Posterior cingulate gyrus (tissue), 11 donors: ENCODE measurements at regions of chr22 and their contacts with region 1.

Region 1: GRCh38 chr22:41448189-41448808 is 1.7 kb upstream of the TOB2 start:
- DNase-seq: peak; percentile 93 to 99 (median 96)

Region 2: GRCh38 chr22:41417622-41418390 is 30.5 kb before region 1 on chr22:
- intact Hi-C with region 1: no loop called
- DNase-seq: peak; percentile 93 to 99 (median 96)

Region 3: GRCh38 chr22:41468381-41469217 is 20.3 kb after region 1 on chr22 and contains the starts of genes ACO2 and PHF5A:
- intact Hi-C with region 1: loop called (anchors 1 kb)
- DNase-seq: peak; percentile 95 to 100 (median 98)